ENCODE measurements at regions of chr2 and their contacts with region 1.

Region 1: DNA sequence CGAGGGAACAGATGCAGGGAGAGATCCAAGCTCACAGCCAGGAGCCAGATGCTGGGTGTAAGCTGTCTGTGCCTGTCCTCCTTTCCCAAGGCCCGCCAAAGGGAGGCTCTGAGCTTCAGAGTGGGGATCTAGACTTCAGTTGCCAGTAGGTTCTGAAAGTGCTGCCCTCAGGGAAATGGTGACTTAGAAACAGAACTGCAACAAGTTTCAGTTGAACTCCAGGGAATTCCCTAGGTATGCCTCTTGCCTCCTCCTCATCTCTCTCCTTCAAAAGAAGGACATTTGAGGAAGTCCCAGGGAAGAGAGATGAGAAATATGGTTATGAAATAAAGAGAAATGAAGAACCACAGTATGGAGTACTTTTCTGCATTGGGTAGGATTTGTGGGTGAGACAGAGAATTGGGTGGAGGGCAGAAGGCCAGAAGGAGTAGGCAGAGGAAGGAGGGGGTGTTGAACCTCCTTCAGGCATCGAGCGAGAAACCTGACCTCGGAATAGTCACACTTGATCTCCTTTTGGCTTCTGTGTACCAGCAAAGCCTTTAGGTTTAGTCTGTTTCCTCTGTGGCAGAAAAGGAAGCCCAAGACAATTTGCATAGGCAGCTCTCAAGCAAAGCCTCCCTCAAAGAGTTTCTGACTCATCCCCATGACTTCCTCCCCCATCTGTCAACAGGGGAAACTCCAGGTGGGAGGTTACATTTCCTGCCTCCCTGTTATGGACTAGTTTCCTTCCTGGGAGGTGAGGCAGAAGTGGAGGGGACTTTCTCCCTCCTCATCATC is 45.7 kb downstream of the QPCT start:
- DNase-seq: peak; percentile 91
- ATAC-seq: peak; percentile 93
- H3K4me3 ChIP-seq: peak overlapping the region in 1 of 5 experiments; percentile 40
- H3K4me3 Mint-ChIP-seq: peak overlapping the region; percentile 81
- H3K27ac ChIP-seq: peak overlapping the region; percentile 91 to 93
- H3K27ac Mint-ChIP-seq: no peak overlapping the region
- H3K4me1 ChIP-seq: peaks cover 37 to 38% of the 10 kb centered on the region in 2 donors
- H3K4me1 Mint-ChIP-seq: peaks cover 3% of the 10 kb centered on the region
- H3K27me3 ChIP-seq: no peaks in the 10 kb centered on the region
- H3K27me3 Mint-ChIP-seq: no peaks in the 10 kb centered on the region
- CTCF ChIP-seq: no peak

Region 2: DNA sequence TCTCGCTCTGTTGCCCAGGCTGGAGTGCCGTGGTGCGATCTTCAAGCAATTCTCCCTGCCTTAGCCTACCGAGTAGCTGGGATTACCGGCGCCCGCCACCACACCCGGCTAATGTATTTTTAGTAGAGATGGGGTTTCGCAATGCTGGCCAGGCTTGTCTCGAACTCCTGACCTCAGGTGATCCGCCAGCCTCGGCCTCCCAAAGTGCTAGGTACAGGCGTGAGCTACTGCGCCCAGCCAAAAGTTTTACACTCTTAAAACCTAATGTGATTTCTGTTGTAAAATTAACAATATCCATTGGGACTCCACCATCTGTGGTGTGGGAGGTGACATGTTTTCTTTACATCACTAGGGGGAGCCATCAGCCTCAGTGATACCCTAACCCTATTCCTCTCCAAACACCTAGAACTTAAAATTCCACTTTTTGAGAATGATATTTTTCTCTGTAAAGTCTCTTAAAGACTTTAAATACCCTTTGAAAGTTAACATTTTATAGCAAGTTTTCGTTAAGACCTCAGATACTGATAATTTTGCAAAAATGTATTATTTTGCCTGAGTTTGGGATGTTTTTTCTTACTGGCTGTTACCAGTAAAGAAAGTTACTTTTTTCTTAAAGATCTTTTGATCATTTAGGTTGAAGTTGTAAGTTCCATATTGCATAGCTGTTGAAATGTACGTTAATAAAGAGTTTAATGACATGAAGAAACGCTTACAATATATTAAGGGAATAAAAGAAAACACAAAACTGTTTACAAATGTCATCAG is 221.8 kb before region 1 on chr2:
- CTCF ChIA-PET with region 1: no interaction called
- POLR2A ChIA-PET with region 1: no interaction called
- intact Hi-C with region 1: loop called (anchors 5 kb)
- DNase-seq: peak; percentile 59
- ATAC-seq: peak; percentile 64
- H3K4me3 ChIP-seq: no peak overlapping the region
- H3K4me3 Mint-ChIP-seq: no peak overlapping the region
- H3K27ac ChIP-seq: no peak overlapping the region
- H3K27ac Mint-ChIP-seq: no peak overlapping the region
- H3K4me1 ChIP-seq: no peaks in the 10 kb centered on the region
- H3K4me1 Mint-ChIP-seq: peaks cover 2% of the 10 kb centered on the region
- H3K27me3 ChIP-seq: no peaks in the 10 kb centered on the region
- H3K27me3 Mint-ChIP-seq: no peaks in the 10 kb centered on the region
- CTCF ChIP-seq: peak; percentile 83

Region 3: DNA sequence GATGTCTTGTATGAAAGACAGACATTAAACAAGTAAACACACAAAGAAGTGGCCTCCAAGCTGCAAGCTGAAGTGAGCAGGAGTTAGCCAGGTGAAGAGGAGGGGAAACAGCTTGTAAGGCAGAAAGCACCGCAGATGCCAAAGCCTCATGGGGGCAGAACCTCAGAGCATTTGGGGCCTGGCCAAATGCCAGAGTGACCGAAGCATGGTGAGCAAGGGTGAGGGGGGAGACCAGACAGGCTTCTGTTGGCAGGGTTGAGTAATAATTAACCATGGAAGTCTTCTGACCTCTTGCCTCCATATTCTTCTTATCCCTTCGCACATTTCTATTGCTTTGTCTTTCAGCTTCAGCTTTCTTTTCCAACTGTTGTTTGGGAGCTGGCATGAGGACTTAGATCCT is 40.1 kb before region 1 on chr2:
- CTCF ChIA-PET with region 1: interaction called, 10 read pairs
- POLR2A ChIA-PET with region 1: interaction called, 3 read pairs
- intact Hi-C with region 1: loop called (anchors 1 kb)
- DNase-seq: peak; percentile 75
- ATAC-seq: peak; percentile 71
- H3K4me3 ChIP-seq: peak overlapping the region in 1 of 5 experiments; percentile 30
- H3K4me3 Mint-ChIP-seq: peak overlapping the region; percentile 47
- H3K27ac ChIP-seq: peak overlapping the region; percentile 49 to 66
- H3K27ac Mint-ChIP-seq: peak overlapping the region; percentile 83
- H3K4me1 ChIP-seq: peaks cover 24 to 38% of the 10 kb centered on the region in 2 donors
- H3K4me1 Mint-ChIP-seq: peaks cover 35% of the 10 kb centered on the region
- H3K27me3 ChIP-seq: peaks cover 0 to 4% (median 2%) of the 10 kb centered on the region in 4 experiments
- H3K27me3 Mint-ChIP-seq: peaks cover 5% of the 10 kb centered on the region
- CTCF ChIP-seq: no peak

Region 4: GRCh38 chr2:37405781-37406180 is 15.6 kb after region 1 on chr2:
- CTCF ChIA-PET with region 1: interaction called, 25 read pairs
- POLR2A ChIA-PET with region 1: no interaction called
- intact Hi-C with region 1: no loop called
- DNase-seq: no peak
- ATAC-seq: no peak
- H3K4me3 ChIP-seq: no peak overlapping the region
- H3K4me3 Mint-ChIP-seq: no peak overlapping the region
- H3K27ac ChIP-seq: no peak overlapping the region
- H3K27ac Mint-ChIP-seq: no peak overlapping the region
- H3K4me1 ChIP-seq: no peaks in the 10 kb centered on the region
- H3K4me1 Mint-ChIP-seq: no peaks in the 10 kb centered on the region
- H3K27me3 ChIP-seq: no peaks in the 10 kb centered on the region
- H3K27me3 Mint-ChIP-seq: no peaks in the 10 kb centered on the region
- CTCF ChIP-seq: no peak

Region 5: DNA sequence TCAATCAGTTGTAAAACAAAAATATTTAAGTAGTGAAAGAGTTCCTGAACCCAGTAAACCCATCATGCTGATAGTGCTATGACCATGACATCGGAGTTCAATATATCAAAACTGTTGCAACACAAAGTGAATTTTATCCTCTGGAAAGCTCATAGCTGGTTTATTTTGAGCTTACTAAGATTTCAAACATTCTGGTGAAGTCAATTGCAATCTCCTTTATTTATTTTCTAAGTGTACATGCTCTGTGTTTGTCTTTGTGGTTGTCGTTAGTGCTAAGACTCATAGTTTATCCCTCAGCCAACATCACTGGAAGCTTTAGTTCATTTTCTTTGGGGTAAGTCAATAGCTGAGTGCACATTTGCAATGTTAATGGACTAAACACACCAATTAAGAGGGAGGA is 46.1 kb after region 1 on chr2:
- CTCF ChIA-PET with region 1: no interaction called
- POLR2A ChIA-PET with region 1: no interaction called
- intact Hi-C with region 1: no loop called
- DNase-seq: no peak
- ATAC-seq: no peak
- H3K4me3 ChIP-seq: no peak overlapping the region
- H3K4me3 Mint-ChIP-seq: no peak overlapping the region
- H3K27ac ChIP-seq: no peak overlapping the region
- H3K27ac Mint-ChIP-seq: no peak overlapping the region
- H3K4me1 ChIP-seq: no peaks in the 10 kb centered on the region
- H3K4me1 Mint-ChIP-seq: no peaks in the 10 kb centered on the region
- H3K27me3 ChIP-seq: no peaks in the 10 kb centered on the region
- H3K27me3 Mint-ChIP-seq: peaks cover 23% of the 10 kb centered on the region
- CTCF ChIP-seq: no peak

Region 6: GRCh38 chr2:37635504-37636380 is 245.6 kb after region 1 on chr2:
- CTCF ChIA-PET with region 1: no interaction called
- POLR2A ChIA-PET with region 1: no interaction called
- intact Hi-C with region 1: no loop called
- DNase-seq: peak; percentile 90
- ATAC-seq: peak; percentile 85
- H3K4me3 ChIP-seq: peak overlapping the region in 1 of 5 experiments; percentile 37
- H3K4me3 Mint-ChIP-seq: peak overlapping the region; percentile 72
- H3K27ac ChIP-seq: peak overlapping the region; percentile 93 to 98
- H3K27ac Mint-ChIP-seq: peak overlapping the region; percentile 96
- H3K4me1 ChIP-seq: peaks cover 33 to 34% of the 10 kb centered on the region in 2 donors
- H3K4me1 Mint-ChIP-seq: peaks cover 44% of the 10 kb centered on the region
- H3K27me3 ChIP-seq: no peaks in the 10 kb centered on the region
- H3K27me3 Mint-ChIP-seq: no peaks in the 10 kb centered on the region
- CTCF ChIP-seq: no peak

Region 7: GRCh38 chr2:37832590-37833197 is 442.5 kb after region 1 on chr2:
- CTCF ChIA-PET with region 1: interaction called, 311 read pairs
- POLR2A ChIA-PET with region 1: no interaction called
- intact Hi-C with region 1: no loop called
- DNase-seq: peak; percentile 82
- ATAC-seq: peak; percentile 94
- H3K4me3 ChIP-seq: no peak overlapping the region
- H3K4me3 Mint-ChIP-seq: no peak overlapping the region
- H3K27ac ChIP-seq: no peak overlapping the region
- H3K27ac Mint-ChIP-seq: no peak overlapping the region
- H3K4me1 ChIP-seq: no peaks in the 10 kb centered on the region
- H3K4me1 Mint-ChIP-seq: peaks cover 2% of the 10 kb centered on the region
- H3K27me3 ChIP-seq: no peaks in the 10 kb centered on the region
- H3K27me3 Mint-ChIP-seq: no peaks in the 10 kb centered on the region
- CTCF ChIP-seq: peak; percentile 93

Region 8: DNA sequence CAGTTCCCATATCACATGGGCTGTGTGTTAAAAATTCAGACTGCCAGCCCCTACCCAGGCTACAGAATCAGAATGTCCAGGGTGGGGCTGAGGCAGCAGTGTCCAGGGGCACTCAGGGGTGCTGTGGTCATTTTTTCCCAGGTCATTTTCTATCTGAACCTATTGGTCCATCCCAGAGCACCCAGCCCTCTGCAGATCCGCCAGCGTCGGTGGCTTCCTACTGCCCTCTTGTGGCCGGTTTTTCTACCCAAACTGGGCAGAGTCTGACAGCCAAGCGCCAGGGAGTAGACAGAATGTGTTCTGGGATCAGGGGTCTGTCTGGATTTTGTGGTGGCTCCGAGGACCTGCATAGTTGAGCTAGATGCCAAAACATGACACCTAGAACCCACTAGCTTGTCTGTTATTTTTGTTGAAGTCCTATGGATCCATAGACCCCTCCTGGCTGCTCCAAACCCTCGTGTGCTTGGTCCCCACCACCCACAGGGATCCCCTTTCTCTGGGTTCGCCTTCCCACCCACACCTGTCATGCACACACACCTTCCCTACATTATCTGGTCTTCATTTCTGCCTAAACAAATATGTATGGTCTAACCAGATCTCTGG is 500.8 kb after region 1 on chr2:
- CTCF ChIA-PET with region 1: interaction called, 3 read pairs
- POLR2A ChIA-PET with region 1: no interaction called
- intact Hi-C with region 1: loop called (anchors 5 kb)
- DNase-seq: peak; percentile 73
- ATAC-seq: peak; percentile 51
- H3K4me3 ChIP-seq: no peak overlapping the region
- H3K4me3 Mint-ChIP-seq: peak overlapping the region; percentile 23
- H3K27ac ChIP-seq: no peak overlapping the region
- H3K27ac Mint-ChIP-seq: no peak overlapping the region
- H3K4me1 ChIP-seq: peaks cover 28 to 31% of the 10 kb centered on the region in 2 donors
- H3K4me1 Mint-ChIP-seq: peaks cover 35% of the 10 kb centered on the region
- H3K27me3 ChIP-seq: no peaks in the 10 kb centered on the region
- H3K27me3 Mint-ChIP-seq: peaks cover 2% of the 10 kb centered on the region
- CTCF ChIP-seq: peak; percentile 84

Measured in B cell (primary cell).